H1 (cell line): ENCODE measurements at regions of chr1 and their contacts with region 1.

Region 1: GRCh38 chr1:109099938-109100773 is 9.6 kb downstream of the TMEM167B start:
- DNase-seq: peak; percentile 95 to 97
- H3K4me3 ChIP-seq: peak overlapping the region; percentile 69 to 91 (median 86)
- H3K27ac ChIP-seq: peak overlapping the region; percentile 95
- H3K4me1 ChIP-seq: no peaks in the 10 kb centered on the region
- H3K27me3 ChIP-seq: no peaks in the 10 kb centered on the region
- CTCF ChIP-seq: peak; percentile 82 to 92 (median 87)
- EP300 ChIP-seq: peak in 1 of 2 experiments; percentile 83; a peak in 1 of 3 replicates
- POLR2A ChIP-seq: peak; percentile 99 to 100
- RAD21 ChIP-seq: peak; percentile 44 to 57; a peak in 3 of 4 replicates

Region 2: DNA sequence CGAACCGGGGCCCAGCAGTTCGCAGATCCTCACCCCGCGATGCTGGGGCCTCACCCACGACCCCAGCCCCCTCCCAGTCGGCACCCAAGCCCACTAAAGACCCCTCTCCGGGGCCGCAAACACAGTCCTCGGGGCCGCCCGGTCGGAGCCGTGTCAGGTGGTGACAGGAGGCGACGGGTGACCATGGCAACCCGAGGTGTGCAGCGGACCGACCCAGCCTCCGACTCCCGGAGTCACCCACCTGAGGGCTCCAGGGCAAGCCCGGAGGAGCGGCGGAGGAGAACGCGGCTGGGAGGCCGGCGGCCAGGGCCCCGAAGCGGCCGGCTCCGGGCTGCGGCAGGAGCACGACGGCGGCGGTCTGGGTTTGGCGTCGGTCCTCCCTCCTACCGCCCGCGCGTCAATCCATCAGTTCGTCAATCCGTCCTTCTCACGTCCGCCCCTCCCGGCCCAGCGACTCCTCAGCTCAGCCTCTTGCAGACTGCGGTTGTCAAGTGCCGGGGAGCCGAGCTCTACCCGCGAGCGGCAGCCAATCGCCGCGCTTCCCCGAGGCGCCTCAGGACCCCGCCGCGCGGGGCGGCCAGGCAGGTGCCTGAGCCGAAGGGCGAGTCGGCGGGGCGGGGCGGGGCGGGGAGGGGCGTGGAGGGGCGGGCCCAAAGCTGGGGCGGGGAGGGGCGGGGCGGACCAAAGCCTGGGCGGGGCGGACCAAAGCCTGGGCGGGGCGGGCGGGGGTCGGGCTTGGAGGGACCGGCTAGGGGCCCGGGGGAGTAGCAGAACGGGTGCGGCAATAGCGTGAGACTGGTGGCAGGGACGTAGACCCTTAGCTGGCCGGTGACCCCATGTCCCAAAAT is 58.3 kb before region 1 on chr1 and contains the start of gene WDR47:
- CTCF ChIA-PET with region 1: no interaction called
- POLR2A ChIA-PET with region 1: interaction called, 10 read pairs
- DNase-seq: peak; percentile 88 to 93
- H3K4me3 ChIP-seq: peak within 1 kb of the TSS; percentile 77 to 86 (median 84)
- H3K27ac ChIP-seq: no peak within 1 kb of the TSS
- H3K4me1 ChIP-seq: no peaks in the 10 kb centered on the region
- H3K27me3 ChIP-seq: no peaks in the 10 kb centered on the region
- CTCF ChIP-seq: no peak
- EP300 ChIP-seq: no peak
- POLR2A ChIP-seq: peak; percentile 59 to 86
- RAD21 ChIP-seq: no peak
- total RNA-seq, gene WDR47: 6.7 and 7.2 TPM in 2 replicates

Region 3: DNA sequence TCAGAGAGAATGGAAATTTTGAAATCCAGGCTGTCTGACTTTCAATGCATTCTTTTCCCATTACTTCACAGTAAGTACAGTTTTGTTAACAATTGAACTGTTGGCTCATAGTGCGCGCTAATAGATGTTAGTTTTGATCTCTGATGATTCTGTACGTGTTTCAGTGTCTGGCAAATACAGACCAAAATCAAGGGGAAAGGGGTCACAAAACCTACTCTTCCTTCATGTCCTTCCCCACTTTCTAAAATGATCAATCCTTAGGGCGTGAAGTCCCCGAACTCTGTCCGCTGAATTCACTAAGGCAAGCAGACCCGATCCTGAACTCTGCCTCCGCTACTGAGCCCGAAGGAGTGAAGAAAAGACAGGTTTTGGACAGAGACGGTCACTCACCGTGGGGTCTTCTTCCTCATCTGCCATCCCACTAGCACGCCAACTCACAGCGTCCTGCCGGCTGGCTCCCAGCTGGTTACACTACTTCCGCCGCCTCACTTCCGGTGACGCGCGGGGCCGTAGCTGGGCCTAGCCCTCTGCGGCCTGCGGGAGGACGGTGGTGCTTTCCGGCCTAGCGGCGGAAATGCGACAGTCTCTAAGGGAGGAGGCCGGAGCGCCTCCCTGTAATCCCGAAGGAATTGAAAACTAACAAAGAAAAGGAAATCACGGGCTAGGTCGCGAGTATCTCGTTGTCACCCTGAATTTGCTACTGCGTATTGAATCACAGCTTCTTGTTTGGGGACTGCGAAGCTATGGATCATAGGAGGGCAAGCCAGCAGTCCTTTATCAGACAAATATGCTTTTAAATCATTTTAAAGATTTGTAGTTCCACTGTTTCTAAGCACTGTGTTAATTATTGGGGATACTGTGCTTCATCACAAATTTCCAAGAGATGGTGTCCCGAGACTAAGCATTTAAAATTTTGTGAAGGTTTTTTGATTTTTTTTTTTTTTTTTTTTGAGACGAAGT is 24.3 kb before region 1 on chr1 and contains the start of gene TAF13:
- CTCF ChIA-PET with region 1: interaction called, 8 read pairs
- POLR2A ChIA-PET with region 1: interaction called, 34 read pairs
- DNase-seq: peak; percentile 82 to 90
- H3K4me3 ChIP-seq: peak within 1 kb of the TSS; percentile 88 to 98 (median 93)
- H3K27ac ChIP-seq: peak within 1 kb of the TSS; percentile 73
- H3K4me1 ChIP-seq: peaks cover 0 to 4% (median 1%) of the 10 kb centered on the region in 4 experiments; a peak in 4 of 7 replicates
- H3K27me3 ChIP-seq: no peaks in the 10 kb centered on the region
- CTCF ChIP-seq: peak in 1 of 3 experiments; percentile 19; a peak in 1 of 4 replicates
- EP300 ChIP-seq: no peak; a peak in 1 of 3 replicates
- POLR2A ChIP-seq: peak; percentile 83 to 90
- RAD21 ChIP-seq: no peak
- total RNA-seq, gene TAF13: 41.5 and 41.7 TPM in 2 replicates

Region 4: GRCh38 chr1:109112652-109113285 is 12.6 kb after region 1 on chr1:
- CTCF ChIA-PET with region 1: interaction called, 32 read pairs
- POLR2A ChIA-PET with region 1: interaction called, 106 read pairs
- DNase-seq: peak; percentile 85 to 100
- H3K4me3 ChIP-seq: peak overlapping the region in 1 of 4 experiments; percentile 72; a peak in 5 of 8 replicates
- H3K27ac ChIP-seq: no peak overlapping the region
- H3K4me1 ChIP-seq: peaks cover 0 to 9% (median 3%) of the 10 kb centered on the region in 4 experiments; a peak in 4 of 7 replicates
- H3K27me3 ChIP-seq: peaks cover 15 to 45% (median 32%) of the 10 kb centered on the region in 4 experiments
- CTCF ChIP-seq: peak; percentile 86 to 96 (median 92)
- EP300 ChIP-seq: peak in 1 of 2 experiments; percentile 73; a peak in 1 of 3 replicates
- POLR2A ChIP-seq: no peak
- RAD21 ChIP-seq: peak; percentile 72 to 83

Region 5: DNA sequence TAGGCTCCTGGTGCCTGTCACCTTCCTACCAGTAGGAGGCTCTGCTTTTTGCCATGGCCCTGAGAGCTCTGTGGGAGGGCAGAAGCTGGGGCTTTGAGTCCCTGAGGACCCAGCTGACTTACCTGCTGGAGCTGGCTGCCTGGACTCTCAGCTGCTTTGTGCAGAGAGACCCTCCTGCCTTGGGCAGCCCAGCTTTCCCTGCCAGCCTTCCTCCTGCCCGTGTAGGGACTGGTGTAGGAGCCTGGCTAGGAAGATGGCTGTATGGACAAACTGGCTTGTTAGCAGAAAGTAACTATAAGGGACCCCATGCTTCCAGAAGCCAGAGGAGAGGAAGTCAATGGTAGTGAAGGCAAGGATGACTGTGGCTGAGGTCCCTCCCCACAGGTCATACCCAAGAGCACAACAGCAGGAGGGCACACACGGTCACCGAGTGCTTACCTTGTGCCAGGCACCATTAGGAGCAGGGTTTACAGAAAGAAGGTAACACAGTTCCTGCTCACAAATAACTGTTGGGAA is 139.5 kb after region 1 on chr1:
- CTCF ChIA-PET with region 1: no interaction called
- POLR2A ChIA-PET with region 1: interaction called, 15 read pairs
- DNase-seq: peak; percentile 65 to 75
- H3K4me3 ChIP-seq: no peak overlapping the region
- H3K27ac ChIP-seq: peak overlapping the region; percentile 13; the same call in 1 of the 2 replicates
- H3K4me1 ChIP-seq: peaks cover 21 to 44% (median 31%) of the 10 kb centered on the region in 4 experiments
- H3K27me3 ChIP-seq: no peaks in the 10 kb centered on the region
- CTCF ChIP-seq: peak; percentile 78 to 91 (median 89)
- EP300 ChIP-seq: 0 out of 3 replicates have a peak, but pooled peaks of 1 of the 2 experiments have one; percentile 3
- POLR2A ChIP-seq: no peak
- RAD21 ChIP-seq: peak; percentile 29 to 60